HepG2 (cell line): ENCODE measurements at regions of chr18 and their contacts with region 1.

Region 1: DNA sequence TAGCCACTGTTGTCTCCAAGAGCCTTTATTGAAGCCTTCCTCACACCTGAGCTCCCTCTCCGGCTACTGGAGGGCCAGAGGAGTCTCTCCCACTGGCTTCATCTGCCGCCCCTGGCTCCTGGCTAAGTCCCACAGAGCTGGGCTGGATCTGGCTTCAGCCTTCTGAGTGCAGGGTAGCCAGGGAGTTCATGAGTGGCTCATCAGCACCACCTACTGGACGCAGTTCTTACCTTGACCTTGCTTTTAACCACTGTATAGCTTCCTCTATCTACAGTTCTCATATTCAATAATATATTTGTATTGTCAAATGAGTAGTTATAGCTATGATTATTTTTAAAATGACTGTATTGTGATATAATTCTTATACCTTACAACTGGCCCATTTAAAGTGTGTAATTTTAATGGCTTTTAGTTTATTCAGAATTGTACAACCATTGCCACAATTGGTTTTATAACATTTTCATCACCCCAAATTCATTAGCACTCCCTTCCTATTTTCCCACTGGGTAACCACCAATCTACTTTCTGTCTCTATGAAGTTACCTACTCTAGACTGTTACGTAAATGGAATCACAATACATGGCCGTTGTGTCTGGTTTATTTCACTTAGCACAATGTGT is 17.7 kb downstream of the CNDP1 start:
- DNase-seq: peak; percentile 74
- ATAC-seq: peak; percentile 99
- H3K4me3 ChIP-seq: no peak overlapping the region
- H3K27ac ChIP-seq: no peak overlapping the region
- H3K4me1 ChIP-seq: peaks cover 16% of the 10 kb centered on the region
- H3K27me3 ChIP-seq: peaks cover 0 to 11% of the 10 kb centered on the region in 2 experiments; a peak in 3 of 5 replicates
- CTCF ChIP-seq: peak; percentile 91
- EP300 ChIP-seq: no peak
- POLR2A ChIP-seq: no peak
- RAD21 ChIP-seq: peak; percentile 68

Region 2: DNA sequence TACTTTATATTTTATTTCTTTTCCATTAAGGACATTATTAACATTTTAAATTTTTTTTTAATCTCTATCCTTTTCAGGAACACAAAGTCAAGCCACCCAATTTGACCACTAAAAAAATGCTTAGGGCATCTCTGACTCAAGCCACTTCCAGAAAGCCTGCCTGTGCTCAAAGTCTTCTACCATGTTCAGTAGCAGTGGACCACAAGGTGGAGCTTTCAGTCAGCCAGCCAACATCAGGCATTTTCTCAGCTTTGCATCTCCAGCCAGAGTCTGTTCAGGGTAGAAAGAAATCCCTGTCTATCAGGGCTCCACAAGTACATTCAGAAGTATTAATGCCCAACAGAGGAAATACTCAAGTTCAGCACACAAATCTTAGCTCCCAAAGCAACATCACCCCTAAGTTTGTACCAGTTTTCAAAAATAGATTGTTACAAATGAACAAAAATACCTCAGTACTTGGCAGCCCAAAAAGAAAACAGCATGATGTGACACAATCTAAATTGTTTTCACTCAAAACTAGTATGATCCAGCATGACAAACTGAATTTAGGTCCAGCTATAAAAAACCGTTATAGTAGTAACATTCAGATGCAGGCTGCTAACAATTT is 198.8 kb before region 1 on chr18:
- CTCF ChIA-PET with region 1: interaction called, 22 read pairs
- POLR2A ChIA-PET with region 1: no interaction called
- in situ Hi-C with region 1: loop called (anchors 5 kb)
- intact Hi-C with region 1: loop called (anchors 1 kb)
- DNase-seq: peak; percentile 63
- ATAC-seq: peak; percentile 93
- H3K4me3 ChIP-seq: no peak overlapping the region
- H3K27ac ChIP-seq: no peak overlapping the region
- H3K4me1 ChIP-seq: peaks cover 19% of the 10 kb centered on the region
- H3K27me3 ChIP-seq: no peaks in the 10 kb centered on the region; a peak in 1 of 5 replicates
- CTCF ChIP-seq: peak; percentile 88
- EP300 ChIP-seq: no peak
- POLR2A ChIP-seq: no peak
- RAD21 ChIP-seq: peak; percentile 74